CD8-positive, alpha-beta T cell (primary cell): ENCODE measurements at regions of chr1 and their contacts with region 1.

Region 1: GRCh38 chr1:162056043-162056442 is 13.4 kb upstream of the NOS1AP start:
- DNase-seq: peak in 8 of 9 experiments; percentile 13 to 64 (median 43)
- ATAC-seq: peak; percentile 38
- H3K4me3 ChIP-seq: no peak overlapping the region
- H3K4me3 Mint-ChIP-seq: no peak overlapping the region
- H3K27ac ChIP-seq: no peak overlapping the region
- H3K27ac Mint-ChIP-seq: no peak overlapping the region
- H3K4me1 ChIP-seq: no peaks in the 10 kb centered on the region
- H3K4me1 Mint-ChIP-seq: no peaks in the 10 kb centered on the region
- H3K27me3 ChIP-seq: no peaks in the 10 kb centered on the region
- H3K27me3 Mint-ChIP-seq: peaks cover 15% of the 10 kb centered on the region
- CTCF ChIP-seq: peak; percentile 67

Region 2: GRCh38 chr1:162276493-162276892 is 220.4 kb after region 1 on chr1:
- CTCF ChIA-PET with region 1: no interaction called
- POLR2A ChIA-PET with region 1: no interaction called
- intact Hi-C with region 1: loop called in 1 of 2 experiments (anchors 2 kb)
- DNase-seq: peak in 2 of 9 experiments; percentile 2 to 14
- ATAC-seq: no peak
- H3K4me3 ChIP-seq: no peak overlapping the region
- H3K4me3 Mint-ChIP-seq: no peak overlapping the region
- H3K27ac ChIP-seq: no peak overlapping the region
- H3K27ac Mint-ChIP-seq: no peak overlapping the region
- H3K4me1 ChIP-seq: no peaks in the 10 kb centered on the region
- H3K4me1 Mint-ChIP-seq: no peaks in the 10 kb centered on the region
- H3K27me3 ChIP-seq: no peaks in the 10 kb centered on the region
- H3K27me3 Mint-ChIP-seq: peaks cover 22% of the 10 kb centered on the region
- CTCF ChIP-seq: no peak

Region 3: DNA sequence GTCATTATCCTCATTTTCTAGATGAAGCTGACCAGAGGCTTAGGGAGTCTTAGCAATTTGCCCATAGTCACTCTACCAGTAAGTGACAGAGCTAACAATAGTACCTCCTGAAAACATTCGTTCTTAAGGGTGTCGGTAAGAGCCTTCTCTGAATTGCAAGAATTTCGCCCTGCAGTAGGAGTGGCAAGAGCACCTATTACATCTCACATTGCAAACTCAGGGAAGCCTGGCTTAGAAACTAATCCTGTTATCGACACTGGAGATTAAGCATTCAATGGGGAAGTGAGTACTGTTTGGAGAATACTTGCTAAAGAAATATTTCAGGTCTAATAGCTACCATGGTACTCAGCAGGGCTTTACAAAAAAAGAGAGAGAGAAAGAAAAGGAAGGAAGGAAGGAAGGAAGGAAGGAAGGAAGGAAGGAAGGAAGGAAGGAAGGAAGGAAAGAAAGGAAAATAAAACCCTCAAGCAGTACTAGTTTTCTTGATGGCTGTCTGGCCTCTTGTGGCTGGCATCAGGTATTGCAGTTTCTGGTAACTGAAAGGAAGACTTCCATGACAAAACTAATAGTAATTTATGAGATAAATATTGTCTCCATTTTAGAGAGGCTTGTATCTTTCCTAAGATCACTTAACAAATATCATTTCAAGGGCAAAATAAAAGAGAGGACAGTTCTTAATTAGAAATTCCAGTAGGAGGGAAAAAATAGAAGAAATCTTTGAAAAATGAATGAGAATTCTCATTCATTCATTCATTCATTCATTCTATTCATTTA is 335.9 kb after region 1 on chr1:
- CTCF ChIA-PET with region 1: interaction called, 13 read pairs
- POLR2A ChIA-PET with region 1: no interaction called
- intact Hi-C with region 1: loop called in 1 of 2 experiments (anchors 1 kb)
- DNase-seq: peak in 2 of 9 experiments; percentile 31 to 46
- ATAC-seq: no peak
- H3K4me3 ChIP-seq: no peak overlapping the region
- H3K4me3 Mint-ChIP-seq: no peak overlapping the region
- H3K27ac ChIP-seq: no peak overlapping the region
- H3K27ac Mint-ChIP-seq: no peak overlapping the region
- H3K4me1 ChIP-seq: no peaks in the 10 kb centered on the region
- H3K4me1 Mint-ChIP-seq: peaks cover 3% of the 10 kb centered on the region
- H3K27me3 ChIP-seq: no peaks in the 10 kb centered on the region
- H3K27me3 Mint-ChIP-seq: peaks cover 8% of the 10 kb centered on the region
- CTCF ChIP-seq: peak; percentile 64

Region 4: DNA sequence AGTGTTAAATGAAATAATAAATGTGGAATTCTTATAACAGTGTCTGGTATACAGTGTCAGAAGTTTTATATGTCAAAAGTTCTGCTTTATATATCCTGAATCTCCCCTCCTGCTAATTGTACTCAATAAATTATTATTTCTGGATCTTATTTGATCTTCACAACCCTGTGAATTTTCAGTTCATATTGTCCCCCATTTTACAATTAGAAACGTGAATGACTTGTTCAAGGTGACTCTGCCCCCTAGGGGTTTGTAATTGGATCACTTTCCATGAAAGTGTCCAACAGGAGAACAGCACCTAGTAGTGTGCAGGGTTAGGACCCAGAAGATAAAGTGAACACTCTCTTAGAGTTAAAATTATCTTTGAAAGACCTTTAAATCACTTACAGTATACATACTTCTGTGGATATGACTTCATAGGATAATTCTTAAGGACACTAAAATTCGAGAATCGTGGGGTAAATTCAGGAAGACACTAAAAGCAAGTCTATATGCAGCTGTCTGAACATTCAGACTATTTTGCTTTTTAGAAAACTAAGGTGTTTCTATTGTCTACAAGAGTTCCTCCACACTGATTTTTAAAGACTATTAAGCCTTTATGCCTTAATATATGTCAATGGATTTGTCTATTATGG is 571.7 kb after region 1 on chr1:
- CTCF ChIA-PET with region 1: interaction called, 7 read pairs
- POLR2A ChIA-PET with region 1: no interaction called
- intact Hi-C with region 1: loop called in 1 of 2 experiments (anchors 5 kb)
- DNase-seq: peak in 2 of 9 experiments; percentile 34 to 45
- ATAC-seq: no peak
- H3K4me3 ChIP-seq: no peak overlapping the region
- H3K4me3 Mint-ChIP-seq: no peak overlapping the region
- H3K27ac ChIP-seq: no peak overlapping the region
- H3K27ac Mint-ChIP-seq: no peak overlapping the region
- H3K4me1 ChIP-seq: no peaks in the 10 kb centered on the region
- H3K4me1 Mint-ChIP-seq: no peaks in the 10 kb centered on the region
- H3K27me3 ChIP-seq: no peaks in the 10 kb centered on the region
- H3K27me3 Mint-ChIP-seq: peaks cover 24% of the 10 kb centered on the region
- CTCF ChIP-seq: peak; percentile 43

Region 5: DNA sequence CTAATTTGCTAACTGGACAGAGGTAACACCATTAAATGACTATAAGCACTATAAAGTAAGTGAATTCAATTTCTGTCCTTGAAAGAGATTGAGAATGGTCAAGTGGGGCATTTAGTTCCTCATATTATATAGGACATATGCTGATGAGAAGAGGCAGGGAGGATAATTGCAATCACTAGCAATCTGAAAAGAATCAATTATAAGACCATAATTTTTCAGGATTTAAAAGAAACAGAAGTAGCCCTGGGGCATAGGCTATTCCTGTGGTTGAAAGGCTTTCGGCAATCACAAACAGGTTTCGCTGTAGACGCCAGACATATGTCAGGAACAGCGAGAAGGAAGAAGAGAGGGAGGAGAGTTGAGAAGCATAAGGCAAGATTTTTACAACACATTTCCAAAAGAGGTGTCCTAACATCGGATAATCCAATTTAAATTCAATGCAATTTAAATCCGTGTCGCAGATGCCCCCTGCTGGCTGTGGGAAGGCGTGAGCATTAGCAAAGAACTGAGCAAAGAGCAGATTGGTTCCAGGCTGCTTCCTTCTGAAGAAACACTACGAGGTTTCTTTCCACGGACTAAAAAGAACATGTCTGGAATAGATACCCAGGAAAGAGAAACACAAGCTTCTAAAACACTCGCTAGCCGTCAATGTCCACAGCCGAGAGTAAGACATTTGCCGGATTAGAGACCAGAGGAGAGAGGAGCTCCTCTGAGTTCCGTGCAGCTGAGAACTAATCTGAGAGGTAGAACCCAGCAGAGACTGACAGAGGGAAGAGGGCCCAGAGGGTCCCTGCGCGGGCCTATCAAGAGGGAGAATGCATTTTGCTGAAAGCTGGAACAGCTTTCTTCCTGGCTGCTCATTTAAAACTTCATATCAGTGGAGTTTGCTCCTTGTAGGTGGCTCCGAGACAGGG is 1118.7 kb after region 1 on chr1:
- CTCF ChIA-PET with region 1: no interaction called
- POLR2A ChIA-PET with region 1: no interaction called
- intact Hi-C with region 1: loop called (anchors 2 to 10 kb)
- DNase-seq: peak in 6 of 9 experiments; percentile 1 to 24 (median 22)
- ATAC-seq: no peak
- H3K4me3 ChIP-seq: no peak overlapping the region
- H3K4me3 Mint-ChIP-seq: no peak overlapping the region
- H3K27ac ChIP-seq: no peak overlapping the region
- H3K27ac Mint-ChIP-seq: no peak overlapping the region
- H3K4me1 ChIP-seq: no peaks in the 10 kb centered on the region
- H3K4me1 Mint-ChIP-seq: no peaks in the 10 kb centered on the region
- H3K27me3 ChIP-seq: peaks cover 0 to 2% of the 10 kb centered on the region in 2 experiments
- H3K27me3 Mint-ChIP-seq: peaks cover 7% of the 10 kb centered on the region
- CTCF ChIP-seq: peak; percentile 14

Region 6: DNA sequence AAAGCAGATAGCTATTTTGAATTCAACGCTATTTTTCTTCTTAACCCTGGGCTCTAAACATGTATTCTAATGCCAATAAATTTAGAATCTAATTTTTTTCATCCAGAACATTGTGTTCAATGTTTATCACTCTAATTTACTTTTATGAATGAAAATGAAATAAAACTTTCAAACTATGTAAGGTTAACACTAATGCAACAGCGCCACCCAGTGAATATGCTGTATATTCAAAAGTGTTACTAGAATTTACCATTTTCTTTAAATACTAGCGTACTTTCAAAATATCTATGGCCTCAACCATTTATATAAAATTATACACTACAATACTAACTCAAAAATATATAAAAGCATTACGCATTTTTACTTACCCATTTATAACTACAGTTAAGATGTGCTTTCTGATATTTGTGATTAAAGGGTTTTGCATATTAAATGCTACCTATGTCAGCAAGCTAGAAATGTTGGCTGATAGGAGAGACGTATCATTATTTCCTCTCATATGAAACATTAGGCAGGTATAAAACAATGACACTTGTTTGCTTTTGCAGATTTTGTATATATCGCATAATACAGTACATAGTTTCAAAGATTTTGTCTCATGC is 1259.8 kb after region 1 on chr1:
- CTCF ChIA-PET with region 1: no interaction called
- POLR2A ChIA-PET with region 1: no interaction called
- intact Hi-C with region 1: loop called in 1 of 2 experiments (anchors 5 kb)
- DNase-seq: peak in 6 of 9 experiments; percentile 22 to 66 (median 50)
- ATAC-seq: peak; percentile 23
- H3K4me3 ChIP-seq: no peak overlapping the region
- H3K4me3 Mint-ChIP-seq: no peak overlapping the region
- H3K27ac ChIP-seq: no peak overlapping the region
- H3K27ac Mint-ChIP-seq: no peak overlapping the region
- H3K4me1 ChIP-seq: peaks cover 2% of the 10 kb centered on the region
- H3K4me1 Mint-ChIP-seq: peaks cover 3% of the 10 kb centered on the region
- H3K27me3 ChIP-seq: no peaks in the 10 kb centered on the region
- H3K27me3 Mint-ChIP-seq: no peaks in the 10 kb centered on the region
- CTCF ChIP-seq: peak; percentile 73